WTC11 (cell line): ENCODE measurements at regions of chr7 and their contacts with region 1.

Region 1: DNA sequence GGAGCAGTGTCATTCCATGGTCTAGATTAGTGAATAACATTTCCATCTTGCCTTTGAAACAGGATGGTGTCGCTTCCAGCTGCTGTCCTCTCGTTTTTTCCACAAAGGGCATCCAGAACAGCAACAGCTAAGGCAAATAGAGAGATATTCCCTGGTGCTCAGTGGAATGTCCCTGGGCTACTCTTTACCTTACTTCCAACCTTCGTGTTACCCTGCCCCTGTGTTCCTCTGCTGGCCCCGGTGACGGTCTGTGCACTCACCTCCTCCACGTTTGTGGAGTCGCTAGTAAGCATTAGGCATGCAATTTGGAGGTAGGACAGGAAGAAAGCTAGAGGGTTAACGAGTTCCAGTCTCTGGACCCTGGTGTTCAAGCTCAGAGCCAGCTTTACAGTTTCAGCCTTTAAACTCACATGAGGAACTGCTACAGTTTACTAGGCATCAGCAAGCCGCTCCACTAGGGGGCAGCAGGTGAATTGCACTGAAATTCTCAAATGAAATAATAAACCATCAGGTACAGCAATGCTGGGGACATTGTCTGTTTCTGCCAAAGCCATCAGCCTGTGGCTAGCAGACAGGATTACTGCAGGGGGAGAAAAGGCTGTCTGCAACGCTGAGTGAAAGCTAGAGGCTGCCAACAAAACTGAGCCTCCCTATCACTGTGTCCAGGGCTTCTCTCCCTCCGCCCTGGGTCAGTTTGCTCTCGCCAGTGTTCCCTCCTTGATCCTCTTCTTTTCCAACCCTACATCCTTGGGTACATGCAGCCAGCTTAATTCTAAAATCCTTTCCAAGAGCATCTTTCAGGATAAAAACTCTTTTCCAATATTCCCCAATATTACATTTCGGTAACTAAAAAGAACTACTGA is 9.0 kb downstream of the MRPL32 start:
- DNase-seq: peak; percentile 90
- ATAC-seq: peak; percentile 90
- H3K4me3 Mint-ChIP-seq: no peak overlapping the region
- H3K27ac Mint-ChIP-seq: peak overlapping the region; percentile 66; the same call in 1 of the 2 replicates
- H3K4me1 Mint-ChIP-seq: peaks cover 9% of the 10 kb centered on the region
- H3K27me3 Mint-ChIP-seq: no peaks in the 10 kb centered on the region
- CTCF ChIP-seq: peak; percentile 91

Region 2: GRCh38 chr7:42726066-42726785 is 215.0 kb before region 1 on chr7:
- CTCF ChIA-PET with region 1: no interaction called
- POLR2A ChIA-PET with region 1: no interaction called
- DNase-seq: no peak
- ATAC-seq: no peak
- H3K4me3 Mint-ChIP-seq: no peak overlapping the region
- H3K27ac Mint-ChIP-seq: no peak overlapping the region
- H3K4me1 Mint-ChIP-seq: peaks cover 19% of the 10 kb centered on the region
- H3K27me3 Mint-ChIP-seq: no peaks in the 10 kb centered on the region
- CTCF ChIP-seq: no peak

Region 3: DNA sequence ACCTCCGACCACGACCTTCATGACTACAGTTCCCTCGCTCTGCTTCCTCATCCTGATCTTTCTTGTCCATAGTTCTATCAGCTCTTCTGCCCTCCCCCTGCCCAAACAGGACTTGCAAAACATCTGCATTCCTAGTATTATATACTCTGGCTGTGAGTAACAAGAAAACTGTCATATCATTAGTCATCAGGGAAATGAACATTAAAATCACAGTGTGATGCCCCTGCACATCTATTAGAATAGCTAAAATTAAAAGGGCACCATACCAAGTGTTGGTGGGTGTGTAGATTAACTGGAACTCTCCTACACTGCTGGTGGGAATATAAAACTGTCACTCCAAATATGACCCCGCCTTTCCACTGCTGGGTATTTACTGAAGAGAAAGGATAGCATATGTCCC is 171.1 kb before region 1 on chr7:
- CTCF ChIA-PET with region 1: no interaction called
- POLR2A ChIA-PET with region 1: no interaction called
- DNase-seq: no peak
- ATAC-seq: no peak
- H3K4me3 Mint-ChIP-seq: no peak overlapping the region
- H3K27ac Mint-ChIP-seq: no peak overlapping the region
- H3K4me1 Mint-ChIP-seq: peaks cover 4% of the 10 kb centered on the region; the same call in 1 of the 2 replicates
- H3K27me3 Mint-ChIP-seq: no peaks in the 10 kb centered on the region
- CTCF ChIP-seq: no peak

Region 4: GRCh38 chr7:42981615-42982014 is 40.4 kb after region 1 on chr7:
- CTCF ChIA-PET with region 1: interaction called, 10 read pairs
- POLR2A ChIA-PET with region 1: no interaction called
- DNase-seq: no peak
- ATAC-seq: no peak
- H3K4me3 Mint-ChIP-seq: no peak overlapping the region
- H3K27ac Mint-ChIP-seq: no peak overlapping the region
- H3K4me1 Mint-ChIP-seq: no peaks in the 10 kb centered on the region
- H3K27me3 Mint-ChIP-seq: no peaks in the 10 kb centered on the region
- CTCF ChIP-seq: no peak

Region 5: DNA sequence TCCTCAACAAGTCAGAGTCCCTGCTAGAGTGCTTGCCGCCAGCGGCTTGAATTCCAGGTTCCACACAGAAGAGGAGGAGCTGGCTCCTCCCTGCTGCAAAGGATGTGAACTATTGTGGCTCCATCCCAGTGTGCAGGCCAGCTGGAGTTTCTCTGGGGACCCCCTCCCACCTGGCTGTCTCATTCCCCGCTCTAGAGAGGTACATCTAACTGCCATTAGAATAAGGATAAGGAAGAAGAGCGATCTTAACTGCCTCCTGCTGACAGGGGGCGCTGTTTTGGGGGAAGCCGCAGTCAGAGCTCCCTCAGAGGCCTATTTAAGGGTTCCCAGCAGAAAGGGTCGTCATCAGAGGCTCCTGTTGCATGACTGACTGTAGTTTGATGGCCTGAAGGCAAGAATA is 130.4 kb after region 1 on chr7:
- CTCF ChIA-PET with region 1: interaction called, 18 read pairs
- POLR2A ChIA-PET with region 1: interaction called, 3 read pairs
- DNase-seq: peak; percentile 88
- ATAC-seq: peak; percentile 98
- H3K4me3 Mint-ChIP-seq: no peak overlapping the region
- H3K27ac Mint-ChIP-seq: no peak overlapping the region
- H3K4me1 Mint-ChIP-seq: peaks cover 24% of the 10 kb centered on the region
- H3K27me3 Mint-ChIP-seq: no peaks in the 10 kb centered on the region
- CTCF ChIP-seq: peak; percentile 85

Region 6: GRCh38 chr7:43170571-43170970 is 229.4 kb after region 1 on chr7:
- CTCF ChIA-PET with region 1: interaction called, 10 read pairs
- POLR2A ChIA-PET with region 1: interaction called, 3 read pairs
- DNase-seq: no peak
- ATAC-seq: peak; percentile 18
- H3K4me3 Mint-ChIP-seq: no peak overlapping the region
- H3K27ac Mint-ChIP-seq: peak overlapping the region; percentile 41; the same call in 1 of the 2 replicates
- H3K4me1 Mint-ChIP-seq: peaks cover 27% of the 10 kb centered on the region
- H3K27me3 Mint-ChIP-seq: no peaks in the 10 kb centered on the region
- CTCF ChIP-seq: no peak

Region 7: GRCh38 chr7:43439631-43440401 is 498.6 kb after region 1 on chr7:
- CTCF ChIA-PET with region 1: interaction called, 21 read pairs
- POLR2A ChIA-PET with region 1: no interaction called
- DNase-seq: peak; percentile 79
- ATAC-seq: peak; percentile 94
- H3K4me3 Mint-ChIP-seq: no peak overlapping the region
- H3K27ac Mint-ChIP-seq: no peak overlapping the region
- H3K4me1 Mint-ChIP-seq: peaks cover 29% of the 10 kb centered on the region
- H3K27me3 Mint-ChIP-seq: no peaks in the 10 kb centered on the region; the same call in 1 of the 2 replicates
- CTCF ChIP-seq: peak; percentile 96